Activated CD8-positive, alpha-beta T cell treated with anti-CD3 and anti-CD28 coated beads for 36 hours (primary cell): ENCODE measurements at regions of chr17 and their contacts with region 1.

Region 1: DNA sequence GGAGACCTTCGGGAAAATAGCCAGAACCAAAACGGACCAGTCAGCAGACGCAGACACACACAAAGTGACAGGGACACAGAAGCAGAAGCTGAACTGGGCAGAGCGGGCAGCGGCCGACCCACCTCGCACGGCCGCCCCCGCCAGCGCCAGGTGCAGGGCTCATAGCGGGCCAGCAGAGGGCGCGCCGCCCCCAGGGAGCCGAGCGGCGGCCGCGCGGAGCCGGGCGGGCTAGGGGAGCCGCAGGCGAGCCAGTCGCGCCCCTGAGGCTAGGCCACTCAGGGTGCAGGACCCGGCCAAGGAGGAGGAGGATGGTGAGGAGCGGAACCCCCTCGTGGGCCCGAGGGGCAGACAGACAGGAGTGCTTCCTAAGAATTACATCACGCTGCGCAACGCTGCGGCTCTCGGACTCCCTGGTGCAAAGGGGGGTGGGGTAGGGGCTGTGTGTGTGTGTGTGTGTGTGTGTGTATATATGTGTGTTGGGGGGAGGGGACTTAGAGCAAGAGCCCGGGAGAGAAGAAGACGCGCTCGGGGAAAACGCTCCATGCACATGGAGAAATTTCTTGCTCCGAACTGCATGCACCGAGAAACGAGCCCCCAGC is 913 bp upstream of the NOG start:
- DNase-seq: peak; percentile 70
- ATAC-seq: peak; percentile 65
- H3K4me3 Mint-ChIP-seq: peak overlapping the region; percentile 73
- H3K27ac Mint-ChIP-seq: no peak overlapping the region
- H3K4me1 Mint-ChIP-seq: peaks cover 14% of the 10 kb centered on the region
- H3K27me3 Mint-ChIP-seq: peaks cover 18% of the 10 kb centered on the region
- CTCF ChIP-seq: peak; percentile 94

Region 2: GRCh38 chr17:56604691-56605290 is 12.2 kb after region 1 on chr17:
- CTCF ChIA-PET with region 1: interaction called, 11 read pairs
- POLR2A ChIA-PET with region 1: interaction called, 6 read pairs
- intact Hi-C with region 1: no loop called
- DNase-seq: no peak
- ATAC-seq: no peak
- H3K4me3 Mint-ChIP-seq: no peak overlapping the region
- H3K27ac Mint-ChIP-seq: no peak overlapping the region
- H3K4me1 Mint-ChIP-seq: peaks cover 48% of the 10 kb centered on the region
- H3K27me3 Mint-ChIP-seq: no peaks in the 10 kb centered on the region
- CTCF ChIP-seq: no peak

Region 3: DNA sequence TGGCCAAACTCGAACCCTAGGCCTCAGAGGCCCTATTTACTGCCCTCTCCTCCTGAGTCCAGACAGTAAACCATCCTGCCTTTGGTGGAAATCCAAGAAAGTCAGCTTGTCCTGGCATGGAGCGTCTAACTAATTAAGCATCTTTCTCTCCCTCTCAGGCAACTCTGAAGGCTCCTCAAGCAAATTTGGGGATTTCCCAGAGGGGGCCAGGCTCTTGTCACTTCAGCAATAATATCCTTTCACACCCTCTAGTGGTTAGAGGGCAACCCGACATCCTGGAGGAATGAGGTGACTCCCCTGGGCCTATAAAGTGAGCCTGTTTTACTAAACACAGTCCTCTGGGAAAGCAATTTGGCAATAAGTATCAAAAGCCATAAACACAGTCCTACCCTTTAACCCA is 61.3 kb after region 1 on chr17:
- CTCF ChIA-PET with region 1: interaction called, 15 read pairs
- POLR2A ChIA-PET with region 1: no interaction called
- intact Hi-C with region 1: loop called (anchors 1 kb)
- DNase-seq: peak; percentile 86
- ATAC-seq: peak; percentile 99
- H3K4me3 Mint-ChIP-seq: no peak overlapping the region
- H3K27ac Mint-ChIP-seq: peak overlapping the region; percentile 8
- H3K4me1 Mint-ChIP-seq: peaks cover 6% of the 10 kb centered on the region
- H3K27me3 Mint-ChIP-seq: no peaks in the 10 kb centered on the region
- CTCF ChIP-seq: peak; percentile 74